ENCODE measurements at regions of chr17 and their contacts with region 1.

Region 1: GRCh38 chr17:7989781-7990655 is 12.4 kb upstream of the GUCY2D start:
- DNase-seq: peak; percentile 73 to 92 (median 83)
- ATAC-seq: peak; percentile 54 to 87 (median 84)
- H3K4me3 ChIP-seq: peak overlapping the region; percentile 16 to 75 (median 63)
- H3K27ac ChIP-seq: peak overlapping the region in 5 of 12 donors; percentile 8 to 84 (median 62)
- H3K4me1 ChIP-seq: peaks cover 0 to 19% (median 5%) of the 10 kb centered on the region in 12 donors
- H3K27me3 ChIP-seq: peaks cover 0 to 6% (median 0%) of the 10 kb centered on the region in 9 donors
- CTCF ChIP-seq: peak; percentile 93 to 100 (median 95)
- POLR2A ChIP-seq: no peak

Region 2: GRCh38 chr17:7745748-7746470 is 244.1 kb before region 1 on chr17:
- intact Hi-C with region 1: loop called in 8 of 10 experiments (anchors 2 to 10 kb)
- DNase-seq: no peak
- ATAC-seq: no peak
- H3K4me3 ChIP-seq: no peak overlapping the region
- H3K27ac ChIP-seq: no peak overlapping the region
- H3K4me1 ChIP-seq: peaks cover 0 to 10% (median 5%) of the 10 kb centered on the region in 12 donors
- H3K27me3 ChIP-seq: peaks cover 0 to 5% (median 0%) of the 10 kb centered on the region in 9 donors
- CTCF ChIP-seq: no peak
- POLR2A ChIP-seq: no peak

Region 3: GRCh38 chr17:7862692-7863437 is 127.2 kb before region 1 on chr17:
- intact Hi-C with region 1: loop called (anchors 1 to 5 kb)
- DNase-seq: peak in 1 of 5 donors; percentile 49
- ATAC-seq: no peak
- H3K4me3 ChIP-seq: no peak overlapping the region
- H3K27ac ChIP-seq: no peak overlapping the region
- H3K4me1 ChIP-seq: peaks cover 0 to 20% (median 13%) of the 10 kb centered on the region in 12 donors
- H3K27me3 ChIP-seq: no peaks in the 10 kb centered on the region
- CTCF ChIP-seq: peak; percentile 69 to 90 (median 83)
- POLR2A ChIP-seq: no peak

Region 4: GRCh38 chr17:7931709-7932482 is 58.1 kb before region 1 on chr17 and contains the starts of genes CNTROB and TRAPPC1:
- intact Hi-C with region 1: loop called in 2 of 10 experiments (anchors 5 kb)
- DNase-seq: peak; percentile 100
- ATAC-seq: peak; percentile 99 to 100 (median 99)
- H3K4me3 ChIP-seq: peak within 1 kb of the TSS; percentile 65 to 97 (median 80)
- H3K27ac ChIP-seq: peak within 1 kb of the TSS in 11 of 12 donors; percentile 52 to 88 (median 80)
- H3K4me1 ChIP-seq: peaks cover 2 to 30% (median 19%) of the 10 kb centered on the region in 12 donors
- H3K27me3 ChIP-seq: no peaks in the 10 kb centered on the region
- CTCF ChIP-seq: no peak
- POLR2A ChIP-seq: peak in 1 of 2 donors; percentile 73
- total RNA-seq, gene CNTROB: 7.9 to 19.2 (median 9.7) TPM
- total RNA-seq, gene TRAPPC1: 60.8 to 170 (median 125) TPM

Region 5: GRCh38 chr17:8275421-8276290 is 285.6 kb after region 1 on chr17:
- intact Hi-C with region 1: no loop called
- DNase-seq: no peak
- ATAC-seq: peak in 1 of 4 donors; percentile 26
- H3K4me3 ChIP-seq: no peak overlapping the region
- H3K27ac ChIP-seq: no peak overlapping the region
- H3K4me1 ChIP-seq: no peaks in the 10 kb centered on the region
- H3K27me3 ChIP-seq: no peaks in the 10 kb centered on the region
- CTCF ChIP-seq: no peak
- POLR2A ChIP-seq: no peak